ENCODE measurements at regions of chr2 and their contacts with region 1.

Region 1: GRCh38 chr2:71510196-71510807 is 56.9 kb downstream of the DYSF start:
- DNase-seq: peak; percentile 42
- ATAC-seq: peak; percentile 79
- H3K4me3 ChIP-seq: no peak overlapping the region
- H3K27ac ChIP-seq: no peak overlapping the region
- H3K4me1 ChIP-seq: no peaks in the 10 kb centered on the region
- H3K27me3 ChIP-seq: peaks cover 14 to 36% of the 10 kb centered on the region in 2 experiments; a peak in 3 of 5 replicates
- CTCF ChIP-seq: peak; percentile 97
- EP300 ChIP-seq: no peak
- POLR2A ChIP-seq: no peak
- RAD21 ChIP-seq: peak; percentile 87

Region 2: DNA sequence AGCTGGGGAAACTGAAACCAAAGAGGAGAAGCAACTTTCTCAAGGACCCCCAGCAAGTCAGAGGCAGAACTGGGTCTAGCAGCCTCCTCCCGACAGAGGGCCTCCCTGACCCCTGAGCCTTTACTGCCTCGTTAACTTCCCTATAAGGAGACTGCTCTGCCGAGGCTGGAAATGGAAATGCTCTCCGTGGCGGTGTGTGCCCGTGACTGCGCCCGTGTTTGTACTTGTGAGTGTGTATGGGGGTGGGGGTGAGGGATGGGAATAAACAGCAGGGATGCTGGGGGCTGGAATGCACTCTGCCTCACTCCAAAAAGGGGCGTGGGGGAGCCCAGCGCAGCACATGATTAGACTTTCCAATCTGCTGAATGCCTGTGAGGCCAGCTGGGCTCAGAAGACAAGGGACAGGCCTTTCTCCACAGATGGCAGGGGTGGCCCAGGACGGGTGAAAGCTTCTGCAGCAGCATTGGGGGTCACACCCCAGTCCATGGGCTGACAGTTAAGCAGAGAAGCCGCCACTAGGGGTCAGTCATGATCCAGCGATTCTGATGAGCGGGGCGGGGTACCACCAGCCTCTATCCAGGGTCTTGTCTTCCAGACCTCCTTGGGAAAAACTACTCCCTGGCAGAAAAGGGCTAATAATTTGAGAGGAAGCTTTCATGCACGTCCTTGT is 353.0 kb before region 1 on chr2:
- CTCF ChIA-PET with region 1: interaction called, 10 read pairs
- POLR2A ChIA-PET with region 1: no interaction called
- in situ Hi-C with region 1: no loop called
- intact Hi-C with region 1: no loop called
- DNase-seq: peak; percentile 41
- ATAC-seq: peak; percentile 69
- H3K4me3 ChIP-seq: no peak overlapping the region
- H3K27ac ChIP-seq: no peak overlapping the region
- H3K4me1 ChIP-seq: no peaks in the 10 kb centered on the region
- H3K27me3 ChIP-seq: peaks cover 0 to 26% of the 10 kb centered on the region in 2 experiments; a peak in 3 of 5 replicates
- CTCF ChIP-seq: peak; percentile 83
- EP300 ChIP-seq: no peak
- POLR2A ChIP-seq: no peak
- RAD21 ChIP-seq: peak; percentile 70

Region 3: DNA sequence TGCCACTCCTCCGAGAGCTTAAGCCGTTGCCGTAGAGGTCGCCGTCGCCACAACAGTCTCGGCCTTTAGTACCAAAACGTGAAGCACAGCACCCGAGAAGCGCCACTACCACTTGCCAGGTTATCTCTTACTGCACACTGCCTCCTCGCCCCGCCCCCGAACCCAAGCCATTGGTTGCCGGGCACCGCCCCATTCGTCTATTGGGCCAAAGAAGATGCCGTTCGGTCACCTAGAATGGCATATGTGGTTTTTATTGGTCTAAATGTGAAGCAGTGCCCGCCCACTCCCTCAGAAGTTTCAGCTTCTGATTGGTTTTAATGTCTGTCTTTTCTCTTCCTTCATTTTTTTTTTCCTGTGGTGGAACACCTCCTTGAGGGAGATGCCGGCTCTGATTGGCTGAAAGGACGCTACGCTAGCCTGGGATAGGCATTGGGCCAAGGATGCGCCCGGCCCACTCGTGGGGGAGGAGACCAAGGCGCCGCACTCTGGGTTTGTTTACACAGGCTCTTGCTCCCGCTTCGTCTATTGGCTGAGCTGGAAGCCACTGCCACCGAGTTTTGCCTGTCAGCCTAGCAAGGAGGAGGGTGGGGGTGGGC is 283.2 kb before region 1 on chr2 and contains the start of gene PAIP2B:
- CTCF ChIA-PET with region 1: interaction called, 8 read pairs
- POLR2A ChIA-PET with region 1: no interaction called
- in situ Hi-C with region 1: loop called (anchors 10 kb)
- intact Hi-C with region 1: no loop called
- DNase-seq: peak; percentile 85
- ATAC-seq: peak; percentile 91
- H3K4me3 ChIP-seq: peak within 1 kb of the TSS; percentile 32 to 66 (median 35); a peak in 5 of 6 replicates
- H3K27ac ChIP-seq: no peak within 1 kb of the TSS
- H3K4me1 ChIP-seq: 0 out of 2 replicates have a peak, but pooled peaks cover 11% of the 10 kb centered on the region
- H3K27me3 ChIP-seq: peaks cover 4 to 29% of the 10 kb centered on the region in 2 experiments
- CTCF ChIP-seq: no peak
- EP300 ChIP-seq: no peak
- POLR2A ChIP-seq: no peak
- RAD21 ChIP-seq: no peak
- total RNA-seq, gene PAIP2B: 0.29 and 0.46 TPM in 2 replicates

Region 4: DNA sequence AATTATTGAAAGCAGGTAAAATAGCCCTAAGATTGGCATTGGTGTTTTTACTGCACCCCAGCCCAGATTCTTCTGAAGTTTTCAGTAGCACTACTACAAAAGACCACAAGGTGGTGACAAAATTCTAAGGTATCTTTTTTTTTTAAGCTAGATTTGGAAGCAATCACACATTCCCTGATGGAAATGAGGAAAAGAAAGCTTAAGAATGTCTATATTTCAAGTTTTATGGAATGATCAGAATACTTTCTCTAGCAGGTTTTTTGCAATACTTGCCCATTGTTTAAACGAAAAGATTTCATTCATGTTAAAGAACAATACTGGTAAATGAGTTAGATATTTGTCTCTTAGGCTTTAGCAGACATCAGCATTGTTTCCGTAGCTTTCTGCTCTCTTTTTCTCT is 210.8 kb before region 1 on chr2:
- CTCF ChIA-PET with region 1: interaction called, 80 read pairs
- POLR2A ChIA-PET with region 1: interaction called, 8 read pairs
- in situ Hi-C with region 1: loop called (anchors 5 kb)
- intact Hi-C with region 1: loop called (anchors 1 kb)
- DNase-seq: peak; percentile 40
- ATAC-seq: no peak
- H3K4me3 ChIP-seq: no peak overlapping the region
- H3K27ac ChIP-seq: no peak overlapping the region
- H3K4me1 ChIP-seq: no peaks in the 10 kb centered on the region
- H3K27me3 ChIP-seq: no peaks in the 10 kb centered on the region; a peak in 1 of 5 replicates
- CTCF ChIP-seq: peak; percentile 71
- EP300 ChIP-seq: no peak
- POLR2A ChIP-seq: no peak
- RAD21 ChIP-seq: peak; percentile 49; the same call in 1 of the 2 replicates

Region 5: DNA sequence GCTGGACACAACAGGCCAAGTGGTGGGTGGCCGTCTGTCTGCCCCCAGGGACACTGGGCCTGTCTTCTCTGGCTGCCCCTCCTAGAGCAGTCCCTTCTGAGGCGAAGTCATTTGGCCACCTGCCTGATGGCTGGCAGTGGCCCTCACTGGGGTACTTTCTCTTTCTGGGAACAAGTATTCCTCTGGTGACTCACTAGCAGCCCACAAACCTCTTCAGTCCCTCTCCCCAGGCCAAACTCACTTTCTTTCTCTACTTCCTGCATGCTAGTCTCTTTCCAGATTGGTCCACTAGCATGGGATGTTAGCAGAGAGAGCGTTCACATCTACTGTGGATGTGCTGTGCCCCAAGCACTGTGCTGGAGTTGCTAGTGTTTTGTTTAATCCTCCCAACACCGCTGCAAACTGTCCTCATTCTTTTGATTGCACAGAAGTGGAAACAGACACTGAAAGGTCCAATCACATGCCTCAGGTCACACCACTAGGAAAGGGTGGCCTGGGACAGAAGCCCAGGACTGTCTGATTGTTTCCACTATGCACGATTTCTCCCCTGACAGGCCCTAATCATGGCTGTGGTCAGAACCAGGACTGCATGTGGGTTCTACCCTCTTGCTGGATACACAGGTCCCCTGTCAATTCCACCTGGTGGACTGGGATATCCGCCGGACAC is 51.8 kb before region 1 on chr2:
- CTCF ChIA-PET with region 1: no interaction called
- POLR2A ChIA-PET with region 1: no interaction called
- in situ Hi-C with region 1: no loop called
- intact Hi-C with region 1: loop called (anchors 5 kb)
- DNase-seq: no peak
- ATAC-seq: peak; percentile 16
- H3K4me3 ChIP-seq: no peak overlapping the region
- H3K27ac ChIP-seq: no peak overlapping the region
- H3K4me1 ChIP-seq: peaks cover 44% of the 10 kb centered on the region
- H3K27me3 ChIP-seq: peaks cover under 1 to 2% of the 10 kb centered on the region in 2 experiments; a peak in 2 of 5 replicates
- CTCF ChIP-seq: no peak
- EP300 ChIP-seq: no peak
- POLR2A ChIP-seq: no peak
- RAD21 ChIP-seq: no peak